WTC11 (cell line): ENCODE measurements at regions of chr5 and their contacts with region 1.

Region 1: DNA sequence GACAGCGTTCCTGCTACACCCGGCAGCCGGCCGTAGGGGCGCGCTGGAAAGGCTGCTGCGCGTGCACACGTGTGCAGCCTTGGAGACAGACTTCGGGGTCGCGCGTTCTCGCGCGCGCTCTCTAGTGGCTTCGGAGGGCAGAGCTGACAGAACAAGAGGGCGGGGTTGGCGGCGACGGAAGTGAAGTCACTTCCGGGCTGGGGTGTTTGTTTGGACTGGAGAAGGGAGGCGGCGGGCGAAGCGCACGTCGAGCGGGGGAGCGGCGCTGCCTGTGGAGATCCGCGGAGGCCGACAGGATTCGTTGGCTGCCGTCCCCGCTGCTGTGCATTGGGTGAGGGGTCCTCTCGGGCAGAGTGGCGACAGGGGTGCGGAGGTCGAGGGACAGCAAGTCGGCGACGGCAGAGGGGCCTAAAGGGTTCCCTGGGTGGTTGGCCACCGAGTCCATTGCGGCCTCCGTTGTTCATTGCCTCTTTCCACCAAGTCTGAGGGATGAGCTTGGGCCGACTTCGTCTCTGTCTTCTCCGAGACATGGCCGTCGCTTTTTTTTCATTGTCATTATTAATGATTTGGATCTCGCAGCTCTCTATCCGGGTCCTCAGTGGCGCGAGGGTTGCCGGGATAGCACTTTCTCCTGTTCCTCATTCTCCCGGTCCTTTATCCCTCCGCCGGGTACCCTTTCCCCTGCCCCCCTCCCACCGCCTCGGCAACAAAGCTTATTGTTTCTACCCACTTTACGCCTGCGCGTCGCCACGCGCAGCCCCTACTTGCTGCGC is at the start of gene PAIP2:
- DNase-seq: peak; percentile 99
- ATAC-seq: peak; percentile 88
- H3K4me3 Mint-ChIP-seq: peak within 1 kb of the TSS; percentile 97
- H3K27ac Mint-ChIP-seq: peak within 1 kb of the TSS; percentile 99
- H3K4me1 Mint-ChIP-seq: peaks cover 26% of the 10 kb centered on the region
- H3K27me3 Mint-ChIP-seq: no peaks in the 10 kb centered on the region
- CTCF ChIP-seq: no peak
- total RNA-seq, gene PAIP2: 122 to 126 TPM (median 126 TPM) in 3 replicates

Region 2: GRCh38 chr5:139293504-139294373 is 48.1 kb before region 1 on chr5 and contains the start of gene MATR3:
- CTCF ChIA-PET with region 1: interaction called, 4 read pairs
- POLR2A ChIA-PET with region 1: interaction called, 34 read pairs
- DNase-seq: peak; percentile 96
- ATAC-seq: peak; percentile 85
- H3K4me3 Mint-ChIP-seq: peak within 1 kb of the TSS; percentile 99
- H3K27ac Mint-ChIP-seq: peak within 1 kb of the TSS; percentile 99
- H3K4me1 Mint-ChIP-seq: peaks cover 36% of the 10 kb centered on the region
- H3K27me3 Mint-ChIP-seq: no peaks in the 10 kb centered on the region
- CTCF ChIP-seq: no peak
- total RNA-seq, gene MATR3: 228 to 290 TPM (median 233 TPM) in 3 replicates

Region 3: GRCh38 chr5:139392678-139393496 is 51.1 kb after region 1 on chr5:
- CTCF ChIA-PET with region 1: interaction called, 19 read pairs
- POLR2A ChIA-PET with region 1: interaction called, 4 read pairs
- DNase-seq: peak; percentile 88
- ATAC-seq: peak; percentile 67
- H3K4me3 Mint-ChIP-seq: peak overlapping the region; percentile 87
- H3K27ac Mint-ChIP-seq: no peak overlapping the region
- H3K4me1 Mint-ChIP-seq: peaks cover 43% of the 10 kb centered on the region
- H3K27me3 Mint-ChIP-seq: peaks cover 39% of the 10 kb centered on the region
- CTCF ChIP-seq: no peak

Region 4: DNA sequence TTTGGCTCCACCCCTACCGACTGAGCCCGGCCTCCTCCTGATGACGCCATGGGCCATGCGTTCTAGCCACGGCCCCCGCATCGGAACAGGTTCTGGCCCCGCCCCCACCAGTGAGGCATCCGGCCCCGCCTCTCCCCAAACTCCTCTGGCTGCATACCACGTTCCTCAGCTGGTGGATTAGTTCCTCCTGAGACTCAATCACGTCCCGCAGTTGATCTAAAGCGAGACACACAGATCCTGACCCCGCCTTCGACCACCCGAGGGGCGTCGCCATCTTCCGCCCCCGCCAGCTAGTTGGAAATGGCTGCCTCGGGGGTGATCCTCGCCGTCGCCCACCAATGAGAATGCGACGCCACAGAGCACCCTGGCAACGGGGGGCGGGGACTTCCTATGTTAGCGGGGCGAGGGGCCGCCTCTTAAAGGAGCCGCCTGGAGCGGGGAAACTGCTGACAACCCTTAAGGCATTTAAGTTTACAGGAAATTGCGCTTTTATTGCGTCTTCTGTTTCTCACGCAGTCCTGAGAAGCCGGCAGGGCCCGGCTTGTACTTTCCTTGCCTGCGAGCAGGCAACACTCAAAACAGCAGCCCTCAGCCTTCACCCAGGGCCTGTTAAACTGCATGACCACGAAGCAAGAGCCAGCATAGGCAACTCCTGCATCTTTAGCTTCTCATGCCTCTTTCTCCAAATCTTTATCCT is 62.1 kb after region 1 on chr5 and contains the start of gene SPATA24:
- CTCF ChIA-PET with region 1: interaction called, 11 read pairs
- POLR2A ChIA-PET with region 1: interaction called, 4 read pairs
- DNase-seq: peak; percentile 98
- ATAC-seq: peak; percentile 93
- H3K4me3 Mint-ChIP-seq: peak within 1 kb of the TSS; percentile 94
- H3K27ac Mint-ChIP-seq: peak within 1 kb of the TSS; percentile 100
- H3K4me1 Mint-ChIP-seq: peaks cover 16% of the 10 kb centered on the region
- H3K27me3 Mint-ChIP-seq: no peaks in the 10 kb centered on the region
- CTCF ChIP-seq: no peak
- total RNA-seq, gene SPATA24: 12.9 to 13.9 TPM (median 13.2 TPM) in 3 replicates

Region 5: DNA sequence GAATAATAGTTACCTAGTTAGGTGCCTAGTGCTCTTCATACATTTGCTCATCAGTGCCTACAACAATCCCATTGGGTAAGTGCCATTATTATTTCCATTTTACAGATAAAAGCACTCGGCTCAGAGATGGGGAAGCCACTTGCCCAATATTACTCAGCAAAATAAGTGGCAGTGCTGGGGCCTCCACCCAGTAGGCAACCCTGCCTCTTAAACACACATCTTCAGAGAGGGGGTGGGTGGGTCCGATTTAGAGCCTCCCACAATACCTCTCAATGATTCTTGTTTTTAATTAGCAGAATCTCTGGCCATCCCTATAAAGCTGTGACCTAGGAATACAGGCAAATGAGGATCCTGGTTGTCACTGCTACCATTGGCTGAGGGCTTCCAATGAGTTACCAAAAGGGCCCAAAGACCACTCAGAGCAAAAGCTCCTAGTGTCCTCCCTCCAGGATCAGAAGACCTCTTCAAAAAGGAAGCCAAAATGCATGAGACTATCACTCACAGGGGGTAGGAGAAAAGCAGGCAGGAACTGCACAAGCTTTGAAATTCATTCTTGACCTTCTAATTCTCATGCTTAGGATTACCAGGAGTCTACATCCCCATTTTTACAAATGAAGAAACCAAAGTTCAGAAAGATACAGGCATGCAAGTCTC is 183.2 kb after region 1 on chr5:
- CTCF ChIA-PET with region 1: no interaction called
- POLR2A ChIA-PET with region 1: no interaction called
- DNase-seq: no peak
- ATAC-seq: no peak
- H3K4me3 Mint-ChIP-seq: no peak overlapping the region; the same call in 1 of the 2 replicates
- H3K27ac Mint-ChIP-seq: no peak overlapping the region; the same call in 1 of the 2 replicates
- H3K4me1 Mint-ChIP-seq: peaks cover 71% of the 10 kb centered on the region
- H3K27me3 Mint-ChIP-seq: peaks cover 17% of the 10 kb centered on the region
- CTCF ChIP-seq: no peak